ENCODE measurements at regions of chr9 and their contacts with region 1.

Region 1: DNA sequence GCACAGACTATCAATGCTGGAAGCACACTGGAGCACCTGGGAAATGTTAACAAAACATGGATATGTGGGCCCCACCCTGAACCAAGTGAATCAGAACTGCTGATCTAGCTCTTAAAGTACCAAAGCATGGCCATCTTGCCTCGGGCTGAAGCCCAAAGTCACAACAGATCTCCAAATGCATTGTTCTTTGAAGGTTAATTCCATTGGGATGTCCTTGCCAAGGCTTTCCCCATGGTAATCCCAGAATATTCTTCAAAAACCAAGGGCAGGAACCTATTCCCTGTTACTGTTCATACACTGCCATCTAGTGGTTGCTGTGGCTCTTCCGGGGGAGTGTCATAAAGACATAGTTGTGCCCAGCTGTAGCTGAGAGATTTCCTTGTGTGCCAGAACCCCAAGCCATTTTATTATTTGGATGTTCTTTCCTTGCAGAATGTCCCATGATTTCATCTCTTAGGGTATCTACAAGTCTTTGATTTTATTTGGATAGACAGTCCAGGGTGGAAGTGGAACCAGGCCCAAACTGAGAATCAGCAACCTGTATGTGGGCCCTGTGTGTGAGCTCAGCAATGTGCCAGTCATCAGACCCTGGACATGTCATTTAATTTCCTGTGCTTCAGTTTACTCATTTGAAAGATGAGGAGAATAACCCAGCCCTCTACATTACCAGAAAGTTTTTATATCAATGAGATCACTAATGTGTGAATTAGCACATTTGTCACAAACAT is 290.0 kb downstream of the ACTL7B start:
- H3K4me3 Mint-ChIP-seq: no peak overlapping the region
- H3K27ac Mint-ChIP-seq: no peak overlapping the region
- H3K4me1 Mint-ChIP-seq: peaks cover 5% of the 10 kb centered on the region
- H3K27me3 Mint-ChIP-seq: no peaks in the 10 kb centered on the region

Region 2: GRCh38 chr9:107421947-107422793 is 1143.6 kb before region 1 on chr9:
- intact Hi-C with region 1: loop called (anchors 2 kb)
- H3K4me3 Mint-ChIP-seq: no peak overlapping the region
- H3K27ac Mint-ChIP-seq: no peak overlapping the region
- H3K4me1 Mint-ChIP-seq: peaks cover 14% of the 10 kb centered on the region
- H3K27me3 Mint-ChIP-seq: peaks cover 11% of the 10 kb centered on the region

Region 3: DNA sequence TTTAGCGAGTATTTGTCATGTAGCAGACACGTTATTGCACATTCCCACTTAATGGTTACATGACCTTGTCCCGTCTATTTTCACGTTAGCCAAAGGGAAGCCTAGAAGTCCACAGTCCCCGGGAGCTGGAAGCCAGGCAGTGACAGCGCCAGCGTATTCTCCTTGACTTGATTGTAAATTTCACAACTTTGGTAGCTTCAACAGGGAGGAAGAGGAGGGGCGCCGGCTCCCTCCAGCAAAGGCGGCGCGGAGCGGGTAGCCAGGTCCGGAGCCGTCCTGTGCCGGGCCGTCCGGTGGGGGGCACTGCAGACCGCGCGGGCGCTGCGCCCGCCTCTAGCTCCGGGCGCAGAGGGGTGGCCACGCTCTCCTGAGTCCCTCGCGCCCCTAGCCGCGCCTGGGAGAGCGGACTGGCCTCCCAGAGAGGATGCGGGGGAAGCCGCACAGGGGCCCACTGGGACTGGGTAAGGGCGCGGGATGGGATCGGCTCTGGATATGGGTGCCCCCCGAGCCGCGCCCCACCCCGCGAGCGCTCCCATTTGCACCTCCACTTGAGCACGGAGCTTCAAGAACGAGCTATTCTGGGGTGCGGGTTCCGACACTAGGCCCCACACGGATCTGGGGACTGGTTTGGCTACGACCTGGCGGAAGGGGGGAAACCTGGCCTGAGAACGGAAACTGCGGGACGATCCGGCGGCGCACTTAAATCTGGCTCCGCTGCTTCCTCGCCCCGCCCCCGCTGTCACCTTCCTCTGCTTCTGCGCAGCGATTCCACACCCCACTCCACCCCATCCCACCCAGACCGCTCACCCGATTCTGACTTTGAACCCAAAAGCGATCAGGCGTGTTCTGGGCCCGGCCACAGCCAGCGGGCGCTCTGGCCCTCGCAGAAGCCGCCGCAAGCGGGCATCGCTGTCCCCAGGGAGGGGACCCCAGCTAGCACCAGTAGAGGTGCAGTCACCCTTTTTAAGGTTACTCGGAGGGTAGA is 1100.1 kb before region 1 on chr9:
- intact Hi-C with region 1: loop called (anchors 1 kb)
- H3K4me3 Mint-ChIP-seq: peak overlapping the region; percentile 81
- H3K27ac Mint-ChIP-seq: peak overlapping the region; percentile 67
- H3K4me1 Mint-ChIP-seq: peaks cover 5% of the 10 kb centered on the region
- H3K27me3 Mint-ChIP-seq: peaks cover 17% of the 10 kb centered on the region

Region 4: DNA sequence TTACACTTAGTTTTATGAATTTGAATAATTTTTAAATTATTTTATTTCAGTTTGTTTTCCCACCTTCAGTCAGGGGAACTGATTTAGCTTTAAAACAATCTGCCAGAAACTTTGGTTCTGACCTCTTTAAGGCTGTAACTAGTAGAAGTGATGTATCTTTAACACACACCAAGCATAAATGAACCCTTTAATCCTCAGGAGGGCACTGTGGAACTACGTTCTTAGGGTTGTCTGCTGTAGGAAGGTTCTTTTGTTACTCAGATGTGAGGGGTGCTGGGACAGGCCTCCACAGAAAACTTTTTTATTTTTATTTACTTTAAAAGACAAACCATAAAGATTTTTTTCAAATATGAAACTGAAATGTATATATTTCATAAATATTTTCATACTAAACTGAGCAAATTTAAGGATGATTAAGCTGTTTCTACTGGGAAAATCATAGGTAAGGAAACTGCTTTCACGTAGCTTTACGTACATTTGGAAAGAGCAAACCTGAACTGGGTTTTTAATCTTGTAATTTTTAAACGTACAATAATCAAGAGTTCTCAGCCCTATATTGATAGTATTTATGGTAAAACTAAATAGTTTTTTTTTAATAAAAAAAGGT is 1081.6 kb before region 1 on chr9:
- intact Hi-C with region 1: loop called (anchors 5 kb)
- H3K4me3 Mint-ChIP-seq: no peak overlapping the region
- H3K27ac Mint-ChIP-seq: no peak overlapping the region
- H3K4me1 Mint-ChIP-seq: peaks cover 40% of the 10 kb centered on the region
- H3K27me3 Mint-ChIP-seq: no peaks in the 10 kb centered on the region

Region 5: GRCh38 chr9:108282872-108283271 is 282.9 kb before region 1 on chr9:
- intact Hi-C with region 1: loop called (anchors 5 kb)
- H3K4me3 Mint-ChIP-seq: no peak overlapping the region
- H3K27ac Mint-ChIP-seq: no peak overlapping the region
- H3K4me1 Mint-ChIP-seq: no peaks in the 10 kb centered on the region
- H3K27me3 Mint-ChIP-seq: peaks cover 2% of the 10 kb centered on the region

Region 6: GRCh38 chr9:108468402-108468801 is 97.4 kb before region 1 on chr9:
- intact Hi-C with region 1: loop called (anchors 5 kb)
- H3K4me3 Mint-ChIP-seq: no peak overlapping the region
- H3K27ac Mint-ChIP-seq: no peak overlapping the region
- H3K4me1 Mint-ChIP-seq: peaks cover 13% of the 10 kb centered on the region
- H3K27me3 Mint-ChIP-seq: peaks cover 5% of the 10 kb centered on the region

Region 7: DNA sequence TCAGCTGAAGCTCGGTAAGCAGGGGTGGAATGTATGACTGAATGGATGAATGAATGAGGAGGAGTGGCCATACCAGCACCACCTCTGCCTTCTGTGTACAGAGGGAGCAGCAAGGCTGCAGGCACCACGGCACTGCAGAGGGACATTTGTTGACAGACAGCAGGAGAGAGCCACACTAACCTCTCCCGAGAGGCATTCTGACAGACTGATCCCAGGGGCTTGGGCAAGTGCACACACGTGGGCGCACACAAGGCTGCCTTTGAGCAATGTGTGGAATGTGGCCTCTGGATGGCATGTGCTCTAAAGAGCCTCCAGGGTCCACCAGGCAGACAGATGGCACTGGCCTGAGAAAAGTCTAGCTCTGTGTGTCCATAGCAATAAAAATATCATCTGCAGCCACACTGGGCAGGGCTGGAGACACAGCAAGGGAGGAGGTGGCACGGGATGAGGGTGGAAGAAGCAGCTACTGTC is 178.1 kb after region 1 on chr9:
- intact Hi-C with region 1: no loop called
- H3K4me3 Mint-ChIP-seq: no peak overlapping the region
- H3K27ac Mint-ChIP-seq: no peak overlapping the region
- H3K4me1 Mint-ChIP-seq: no peaks in the 10 kb centered on the region
- H3K27me3 Mint-ChIP-seq: no peaks in the 10 kb centered on the region

Region 8: GRCh38 chr9:108761655-108762347 is 196.0 kb after region 1 on chr9:
- intact Hi-C with region 1: loop called (anchors 5 kb)
- H3K4me3 Mint-ChIP-seq: no peak overlapping the region
- H3K27ac Mint-ChIP-seq: no peak overlapping the region
- H3K4me1 Mint-ChIP-seq: peaks cover 4% of the 10 kb centered on the region
- H3K27me3 Mint-ChIP-seq: no peaks in the 10 kb centered on the region